ENCODE measurements at regions of chr7 and their contacts with region 1.

Region 1: DNA sequence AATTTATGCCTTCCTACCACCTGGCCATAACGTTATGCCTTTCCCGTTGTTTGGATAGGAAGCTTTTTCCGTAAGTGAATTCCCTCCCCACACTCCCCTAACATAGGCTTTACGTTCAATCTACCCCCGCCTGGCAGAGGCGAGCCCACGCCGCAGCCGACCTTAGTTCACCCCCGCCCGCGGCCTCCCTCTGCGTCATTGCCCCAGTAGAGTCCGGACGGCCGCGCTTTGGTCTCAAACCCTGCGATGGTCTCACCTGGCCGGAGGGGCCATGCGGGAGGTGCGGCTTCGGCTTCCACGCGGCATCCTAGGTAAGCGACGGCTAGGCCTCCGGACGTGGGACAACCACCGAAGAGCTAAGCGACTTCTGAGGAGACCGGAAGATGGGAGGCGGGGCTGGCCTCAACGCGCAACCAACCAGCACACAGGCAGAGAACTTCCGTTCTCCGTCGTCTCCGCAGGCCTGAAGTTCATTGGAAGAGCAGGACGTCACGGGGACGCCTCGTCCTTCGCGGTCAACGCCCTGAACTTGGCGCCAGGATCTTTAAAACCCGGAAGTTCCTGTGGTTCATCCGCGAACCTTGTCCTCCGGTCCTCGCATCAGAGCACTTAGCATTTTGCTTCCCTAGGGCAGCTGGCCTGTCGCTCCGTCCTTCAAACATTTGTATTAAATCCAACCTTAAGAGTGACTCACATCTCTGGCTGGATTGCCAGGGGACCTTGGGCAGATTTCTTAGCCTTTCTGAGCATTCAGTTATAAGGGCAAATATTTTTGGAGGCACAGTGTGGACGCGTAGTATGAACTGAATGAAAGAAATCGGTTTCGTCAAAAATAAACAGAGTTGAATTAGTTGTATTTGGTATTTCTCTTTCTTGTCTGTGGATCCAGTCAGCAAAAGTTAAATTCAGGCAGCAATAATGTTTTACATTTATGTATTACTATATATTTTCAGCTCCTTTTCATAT is at the start of gene CHCHD2:
- DNase-seq: peak; percentile 92
- H3K4me3 Mint-ChIP-seq: peak within 1 kb of the TSS; percentile 95
- H3K27ac Mint-ChIP-seq: peak within 1 kb of the TSS; percentile 94
- H3K4me1 Mint-ChIP-seq: peaks cover 21% of the 10 kb centered on the region
- H3K27me3 Mint-ChIP-seq: no peaks in the 10 kb centered on the region
- total RNA-seq, gene CHCHD2: 613 and 617 TPM in 2 replicates

Region 2: DNA sequence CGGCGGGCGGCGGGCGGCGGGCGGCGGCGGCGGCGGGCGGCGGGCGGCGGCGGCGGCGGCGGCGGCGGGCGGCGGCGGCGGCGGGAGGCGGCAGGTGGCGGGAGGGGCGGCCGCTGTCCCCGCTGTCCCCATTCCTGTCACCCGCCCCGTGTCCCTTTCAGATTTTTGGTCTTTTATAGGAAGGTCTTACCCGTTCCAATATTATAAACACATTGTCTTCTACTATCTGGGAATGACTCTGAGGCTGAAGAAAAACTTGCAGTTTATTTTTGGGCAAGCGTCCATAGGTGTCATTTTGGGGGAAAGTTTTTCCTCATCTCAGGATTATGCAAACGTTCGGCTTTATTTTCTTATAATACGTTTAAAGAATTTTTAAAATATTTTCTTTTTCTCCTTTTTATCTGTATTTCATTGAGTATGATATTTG is 218.6 kb before region 1 on chr7:
- intact Hi-C with region 1: loop called (anchors 1 kb)
- DNase-seq: no peak
- H3K4me3 Mint-ChIP-seq: peak overlapping the region; percentile 87
- H3K27ac Mint-ChIP-seq: peak overlapping the region; percentile 84
- H3K4me1 Mint-ChIP-seq: peaks cover 5% of the 10 kb centered on the region
- H3K27me3 Mint-ChIP-seq: peaks cover 2% of the 10 kb centered on the region

Region 3: GRCh38 chr7:55951637-55952351 is 154.6 kb before region 1 on chr7 and contains the start of gene MRPS17:
- intact Hi-C with region 1: loop called (anchors 1 kb)
- DNase-seq: peak; percentile 92
- H3K4me3 Mint-ChIP-seq: peak within 1 kb of the TSS; percentile 92
- H3K27ac Mint-ChIP-seq: peak within 1 kb of the TSS; percentile 92
- H3K4me1 Mint-ChIP-seq: peaks cover 10% of the 10 kb centered on the region
- H3K27me3 Mint-ChIP-seq: no peaks in the 10 kb centered on the region
- total RNA-seq, gene MRPS17: 38.2 and 39.3 TPM in 2 replicates

Region 4: DNA sequence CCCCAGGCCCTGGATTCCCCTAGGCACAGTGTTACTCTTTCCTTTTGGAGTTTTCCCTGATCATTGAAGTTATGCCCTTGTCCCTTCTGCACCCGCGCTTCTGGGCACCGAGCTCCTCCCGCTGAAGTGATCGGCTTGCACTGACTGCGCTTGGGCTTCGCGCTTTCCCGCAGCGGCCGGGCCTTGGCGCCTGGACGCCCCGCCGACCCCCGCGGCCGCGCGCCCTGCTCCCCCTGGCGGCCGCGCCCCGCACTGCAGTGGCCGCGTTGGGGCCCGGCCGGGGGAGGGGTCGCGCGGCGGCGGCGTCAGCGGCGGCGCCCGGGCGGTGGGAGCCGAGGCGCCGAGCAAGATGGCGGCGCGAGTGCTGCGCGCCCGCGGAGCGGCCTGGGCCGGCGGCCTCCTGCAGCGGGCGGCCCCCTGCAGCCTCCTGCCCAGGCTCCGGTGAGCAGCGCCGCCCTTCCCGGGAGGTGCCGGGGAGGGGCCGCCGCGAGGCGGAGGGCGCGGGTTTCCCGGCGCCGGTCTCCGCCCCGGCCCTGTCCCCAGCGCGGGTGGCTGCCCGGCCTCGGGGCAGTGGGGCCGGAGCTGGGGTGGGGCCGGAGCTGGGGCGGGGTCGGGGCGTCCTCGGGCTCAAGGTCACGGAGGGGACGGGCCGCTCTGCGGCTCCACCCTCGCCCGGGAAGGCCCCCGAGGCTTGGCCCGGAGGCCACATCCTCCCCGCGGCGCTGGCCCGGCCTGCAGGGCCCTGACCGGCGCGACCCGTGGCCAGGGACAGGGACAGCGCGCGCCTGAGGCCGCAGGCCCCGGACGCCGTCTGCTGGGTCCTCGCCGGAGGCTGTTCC is 141.9 kb before region 1 on chr7 and contains the start of gene NIPSNAP2:
- intact Hi-C with region 1: loop called (anchors 1 kb)
- DNase-seq: peak; percentile 55
- H3K4me3 Mint-ChIP-seq: peak within 1 kb of the TSS; percentile 88
- H3K27ac Mint-ChIP-seq: peak within 1 kb of the TSS; percentile 89
- H3K4me1 Mint-ChIP-seq: peaks cover 26% of the 10 kb centered on the region
- H3K27me3 Mint-ChIP-seq: no peaks in the 10 kb centered on the region
- total RNA-seq, gene NIPSNAP2: 49.4 and 50.0 TPM in 2 replicates

Region 5: GRCh38 chr7:56019501-56019900 is 86.9 kb before region 1 on chr7:
- intact Hi-C with region 1: no loop called
- DNase-seq: no peak
- H3K4me3 Mint-ChIP-seq: no peak overlapping the region
- H3K27ac Mint-ChIP-seq: no peak overlapping the region
- H3K4me1 Mint-ChIP-seq: no peaks in the 10 kb centered on the region
- H3K27me3 Mint-ChIP-seq: no peaks in the 10 kb centered on the region

Region 6: DNA sequence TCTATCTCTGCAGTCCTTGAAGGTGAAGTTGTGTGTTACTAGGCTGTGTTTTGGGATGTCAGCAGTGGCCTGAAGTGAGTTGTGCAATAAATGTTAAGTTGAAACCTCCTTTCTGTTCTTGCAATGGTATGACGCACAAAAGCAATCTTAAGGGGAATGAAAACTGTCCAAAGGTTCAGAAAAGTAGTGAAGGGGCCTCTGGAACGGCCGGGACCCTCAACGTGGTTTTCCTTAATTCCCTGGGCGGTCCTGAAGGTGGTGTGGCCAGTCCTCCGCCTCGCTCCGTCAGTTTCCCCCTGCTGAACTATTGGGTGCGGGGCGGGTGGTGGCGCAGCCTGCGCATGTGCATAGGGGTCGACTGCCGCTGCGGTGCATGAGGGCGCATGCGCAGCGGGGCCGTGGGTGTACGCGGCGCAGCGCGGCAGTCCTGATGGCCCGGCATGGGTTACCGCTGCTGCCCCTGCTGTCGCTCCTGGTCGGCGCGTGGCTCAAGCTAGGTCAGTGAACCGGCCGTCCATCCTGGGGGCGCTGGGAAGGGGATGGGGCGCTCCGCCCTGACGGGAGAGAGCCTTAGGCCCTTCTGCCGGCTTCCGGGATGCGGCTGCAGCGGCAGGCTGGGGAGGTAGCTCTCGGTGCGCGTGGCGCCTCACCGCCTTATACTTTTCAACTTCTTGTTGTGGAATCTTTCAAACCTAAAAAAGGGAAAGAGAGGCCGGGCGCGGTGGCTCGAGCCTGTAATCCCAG is 42.3 kb before region 1 on chr7 and contains the start of gene SUMF2:
- intact Hi-C with region 1: loop called (anchors 1 kb)
- DNase-seq: peak; percentile 88
- H3K4me3 Mint-ChIP-seq: peak within 1 kb of the TSS; percentile 94
- H3K27ac Mint-ChIP-seq: peak within 1 kb of the TSS; percentile 87
- H3K4me1 Mint-ChIP-seq: peaks cover 46% of the 10 kb centered on the region
- H3K27me3 Mint-ChIP-seq: no peaks in the 10 kb centered on the region
- total RNA-seq, gene SUMF2: 157 and 166 TPM in 2 replicates

Region 7: DNA sequence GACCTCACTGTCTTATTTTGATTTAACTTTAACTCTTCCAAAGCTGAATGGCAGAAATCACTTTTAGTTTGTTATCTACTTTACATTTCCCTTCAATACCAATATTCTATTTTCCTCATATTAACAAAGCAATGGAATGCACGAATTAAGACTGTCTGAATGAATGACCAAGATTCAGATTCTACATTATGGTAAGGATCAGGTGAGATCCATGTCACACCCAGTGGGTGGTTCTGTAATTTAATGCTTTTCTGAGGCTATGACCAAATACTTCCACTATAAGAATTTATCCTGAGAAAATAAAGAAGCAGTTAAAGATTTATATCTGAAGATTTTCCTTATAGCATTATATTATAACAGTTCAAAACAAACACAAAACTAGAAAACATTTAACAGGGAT is 100.0 kb after region 1 on chr7:
- intact Hi-C with region 1: loop called (anchors 5 kb)
- DNase-seq: no peak
- H3K4me3 Mint-ChIP-seq: no peak overlapping the region
- H3K27ac Mint-ChIP-seq: no peak overlapping the region
- H3K4me1 Mint-ChIP-seq: no peaks in the 10 kb centered on the region
- H3K27me3 Mint-ChIP-seq: no peaks in the 10 kb centered on the region

Measured in activated T-helper 1 cell treated with anti-CD3 and anti-CD28 coated beads, Interleukin-12 subunit alpha, Interleukin-12 subunit beta, Interleukin-2, Interleukin-4 antibody, amounts not matched to agents 30 ng/mL and 10 ng/mL and 1 ng/mL, durations not matched to agents 14 hours and 24 hours and 36 hours (primary cell).